H1 (cell line): ENCODE measurements at regions of chr6 and their contacts with region 1.

Region 1: DNA sequence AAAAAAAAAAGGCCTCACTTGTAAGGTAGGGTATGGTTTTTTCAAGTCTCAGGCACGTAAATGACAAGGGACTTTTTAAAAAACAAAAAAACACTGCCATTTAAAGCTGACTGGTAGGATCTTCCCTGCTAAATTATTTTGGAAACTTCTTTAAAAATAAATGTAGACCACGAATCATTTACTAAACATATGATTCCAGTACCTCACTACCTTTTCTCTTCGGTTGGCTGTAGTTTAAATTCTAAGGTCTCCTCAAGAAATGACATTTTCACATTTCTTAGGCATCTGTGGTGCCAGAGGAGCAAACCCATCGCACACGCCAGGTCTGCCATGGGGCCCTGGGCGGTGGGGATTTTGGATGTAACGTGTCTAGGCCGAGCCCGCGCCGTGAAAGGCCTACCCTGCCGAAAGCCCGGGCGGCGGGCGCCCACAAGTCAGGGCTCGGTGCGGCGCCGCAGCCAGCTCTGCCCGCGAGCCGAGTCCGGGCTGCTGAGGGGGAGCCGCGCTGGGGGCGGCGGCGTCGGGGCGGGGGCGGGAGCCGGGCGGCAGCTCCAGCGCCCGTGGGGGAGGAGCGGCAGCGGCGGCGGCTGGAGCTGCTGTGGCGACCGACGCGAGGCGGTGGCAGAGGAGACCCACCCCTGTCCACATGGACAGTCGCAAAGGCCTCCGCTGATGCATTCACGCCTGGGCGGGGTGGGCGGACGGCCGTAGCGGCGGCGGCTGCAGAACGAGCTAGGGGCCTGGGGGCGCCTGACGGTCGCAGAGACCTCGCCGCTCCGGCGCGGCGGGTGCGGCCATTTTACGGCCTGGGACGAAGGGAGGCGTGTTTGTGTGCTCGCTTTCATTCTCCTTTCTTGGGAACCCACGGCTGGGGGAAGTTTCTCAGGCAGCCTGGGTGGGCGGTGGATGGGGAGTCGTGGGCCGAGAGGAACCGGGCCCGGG is at the start of gene SENP6:
- DNase-seq: peak in 1 of 2 experiments; percentile 87
- H3K4me3 ChIP-seq: peak within 1 kb of the TSS; percentile 90 to 99 (median 93)
- H3K27ac ChIP-seq: peak within 1 kb of the TSS; percentile 95
- H3K4me1 ChIP-seq: peaks cover 0 to 8% (median 2%) of the 10 kb centered on the region in 4 experiments; a peak in 3 of 7 replicates
- H3K27me3 ChIP-seq: no peaks in the 10 kb centered on the region
- CTCF ChIP-seq: no peak
- EP300 ChIP-seq: peak in 1 of 2 experiments; percentile 31; a peak in 1 of 3 replicates
- POLR2A ChIP-seq: peak; percentile 73 to 87; a peak in 2 of 3 replicates
- RAD21 ChIP-seq: 0 out of 4 replicates have a peak, but pooled peaks of 1 of the 2 experiments have one; percentile 0
- total RNA-seq, gene SENP6: 94.7 and 103 TPM in 2 replicates

Region 2: DNA sequence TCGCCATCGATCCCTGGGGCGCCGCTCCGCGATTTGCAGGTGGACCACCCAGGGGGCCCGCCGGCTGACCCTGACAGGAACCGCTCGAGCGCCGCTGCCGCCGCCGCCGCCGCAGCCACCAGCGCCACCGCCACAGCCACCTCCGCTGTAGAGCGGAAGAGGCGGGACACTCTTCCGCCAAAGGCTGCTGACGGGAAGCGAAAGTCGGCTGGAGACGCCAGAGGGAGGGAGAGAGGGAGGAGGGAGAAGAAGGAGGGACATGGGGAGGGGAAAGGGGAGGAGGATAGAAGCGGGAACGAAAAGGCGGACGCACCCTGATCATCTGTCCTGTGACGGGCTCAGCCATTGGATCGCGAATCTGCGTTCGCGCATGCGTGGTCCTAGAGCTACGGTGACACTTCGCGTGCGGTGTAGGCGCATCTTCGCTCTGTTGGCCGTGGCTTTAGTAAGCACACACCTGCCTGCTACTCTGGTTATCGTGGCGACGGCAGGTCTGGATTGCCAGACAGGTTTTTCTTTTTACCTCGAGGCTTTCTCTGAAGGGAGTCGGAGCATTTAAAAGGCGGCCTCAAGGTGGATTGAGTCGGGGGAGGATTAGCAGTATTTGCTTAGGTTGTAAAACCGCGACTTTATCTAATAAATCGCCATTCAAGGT is 316.8 kb before region 1 on chr6 and contains the start of gene TMEM30A:
- CTCF ChIA-PET with region 1: no interaction called
- POLR2A ChIA-PET with region 1: interaction called, 11 read pairs
- DNase-seq: peak; percentile 93 to 98
- H3K4me3 ChIP-seq: peak within 1 kb of the TSS; percentile 74 to 99 (median 98)
- H3K27ac ChIP-seq: peak within 1 kb of the TSS; percentile 44; the same call in 1 of the 2 replicates
- H3K4me1 ChIP-seq: peaks cover 0 to 10% (median 0%) of the 10 kb centered on the region in 4 experiments; a peak in 2 of 7 replicates
- H3K27me3 ChIP-seq: no peaks in the 10 kb centered on the region
- CTCF ChIP-seq: no peak
- EP300 ChIP-seq: peak in 1 of 2 experiments; percentile 79; a peak in 1 of 3 replicates
- POLR2A ChIP-seq: peak; percentile 43 to 77
- RAD21 ChIP-seq: 0 out of 4 replicates have a peak, but pooled peaks of 1 of the 2 experiments have one; percentile 1
- total RNA-seq, gene TMEM30A: 65.8 and 71.0 TPM in 2 replicates

Region 3: DNA sequence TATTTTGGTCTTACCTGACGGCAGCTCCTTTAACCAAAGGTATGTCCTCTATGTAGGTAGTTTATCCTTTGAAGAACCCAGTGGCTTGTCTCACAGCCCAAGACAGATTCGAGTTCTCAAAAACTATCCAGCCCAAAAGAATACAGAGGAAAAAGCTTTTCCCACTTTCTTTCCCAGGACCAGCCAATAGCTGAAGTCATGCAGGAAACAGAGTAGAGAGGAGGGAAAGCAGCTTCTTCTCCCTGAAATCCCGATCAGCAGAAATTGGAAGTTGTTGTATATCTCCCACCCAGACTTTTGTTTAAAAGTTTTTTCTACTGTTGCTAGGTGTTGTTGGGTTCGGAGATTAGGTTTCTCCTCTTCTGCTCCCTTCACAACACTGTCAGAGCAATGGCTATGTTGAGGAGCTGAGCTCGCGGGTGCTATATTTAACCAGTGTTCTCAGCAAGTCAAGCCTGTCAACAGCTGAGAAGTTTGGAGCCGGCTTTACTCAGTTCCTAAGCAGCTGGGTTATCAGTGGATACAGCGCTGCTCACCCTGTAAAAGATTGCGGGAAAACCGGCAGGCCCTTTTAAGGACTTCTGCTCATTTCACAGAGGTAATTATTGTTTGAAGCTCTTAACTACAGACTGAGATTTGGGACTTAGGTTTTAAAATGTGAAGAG is 108.0 kb before region 1 on chr6 and contains the start of gene FILIP1:
- CTCF ChIA-PET with region 1: no interaction called
- POLR2A ChIA-PET with region 1: no interaction called
- DNase-seq: no peak
- H3K4me3 ChIP-seq: no peak within 1 kb of the TSS
- H3K27ac ChIP-seq: no peak within 1 kb of the TSS
- H3K4me1 ChIP-seq: peaks cover 0 to 3% (median 0%) of the 10 kb centered on the region in 4 experiments; a peak in 3 of 7 replicates
- H3K27me3 ChIP-seq: no peaks in the 10 kb centered on the region
- CTCF ChIP-seq: no peak
- EP300 ChIP-seq: no peak
- POLR2A ChIP-seq: no peak
- RAD21 ChIP-seq: no peak
- total RNA-seq, gene FILIP1: 5.0 and 5.7 TPM in 2 replicates

Region 4: DNA sequence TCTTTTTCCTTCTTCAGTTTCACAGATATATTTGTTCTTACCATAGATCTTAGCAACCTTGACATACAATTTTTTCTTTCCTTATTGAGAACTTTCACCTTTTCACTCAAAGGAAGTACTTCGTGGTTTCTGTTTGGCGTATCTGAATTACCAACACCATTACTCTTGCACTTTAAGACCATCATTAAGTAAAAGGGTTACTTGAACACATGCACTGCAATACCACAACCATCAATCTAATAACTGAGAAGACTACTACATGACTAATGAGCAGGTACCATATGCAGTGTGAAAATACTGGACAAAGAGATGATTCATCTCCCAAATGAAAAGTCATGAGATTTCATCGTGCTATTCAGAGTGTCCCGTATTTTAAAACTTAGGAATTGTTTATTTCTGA is 21.6 kb before region 1 on chr6:
- CTCF ChIA-PET with region 1: interaction called, 3 read pairs
- POLR2A ChIA-PET with region 1: interaction called, 18 read pairs
- DNase-seq: no peak
- H3K4me3 ChIP-seq: no peak overlapping the region
- H3K27ac ChIP-seq: no peak overlapping the region
- H3K4me1 ChIP-seq: no peaks in the 10 kb centered on the region
- H3K27me3 ChIP-seq: no peaks in the 10 kb centered on the region
- CTCF ChIP-seq: no peak
- EP300 ChIP-seq: no peak
- POLR2A ChIP-seq: no peak
- RAD21 ChIP-seq: no peak

Region 5: GRCh38 chr6:75611702-75612375 is 10.3 kb after region 1 on chr6:
- CTCF ChIA-PET with region 1: no interaction called
- POLR2A ChIA-PET with region 1: interaction called, 48 read pairs
- DNase-seq: no peak
- H3K4me3 ChIP-seq: no peak overlapping the region
- H3K27ac ChIP-seq: no peak overlapping the region
- H3K4me1 ChIP-seq: peaks cover 0 to 10% (median 4%) of the 10 kb centered on the region in 4 experiments; a peak in 4 of 7 replicates
- H3K27me3 ChIP-seq: no peaks in the 10 kb centered on the region
- CTCF ChIP-seq: no peak
- EP300 ChIP-seq: no peak
- POLR2A ChIP-seq: no peak
- RAD21 ChIP-seq: no peak

Region 6: DNA sequence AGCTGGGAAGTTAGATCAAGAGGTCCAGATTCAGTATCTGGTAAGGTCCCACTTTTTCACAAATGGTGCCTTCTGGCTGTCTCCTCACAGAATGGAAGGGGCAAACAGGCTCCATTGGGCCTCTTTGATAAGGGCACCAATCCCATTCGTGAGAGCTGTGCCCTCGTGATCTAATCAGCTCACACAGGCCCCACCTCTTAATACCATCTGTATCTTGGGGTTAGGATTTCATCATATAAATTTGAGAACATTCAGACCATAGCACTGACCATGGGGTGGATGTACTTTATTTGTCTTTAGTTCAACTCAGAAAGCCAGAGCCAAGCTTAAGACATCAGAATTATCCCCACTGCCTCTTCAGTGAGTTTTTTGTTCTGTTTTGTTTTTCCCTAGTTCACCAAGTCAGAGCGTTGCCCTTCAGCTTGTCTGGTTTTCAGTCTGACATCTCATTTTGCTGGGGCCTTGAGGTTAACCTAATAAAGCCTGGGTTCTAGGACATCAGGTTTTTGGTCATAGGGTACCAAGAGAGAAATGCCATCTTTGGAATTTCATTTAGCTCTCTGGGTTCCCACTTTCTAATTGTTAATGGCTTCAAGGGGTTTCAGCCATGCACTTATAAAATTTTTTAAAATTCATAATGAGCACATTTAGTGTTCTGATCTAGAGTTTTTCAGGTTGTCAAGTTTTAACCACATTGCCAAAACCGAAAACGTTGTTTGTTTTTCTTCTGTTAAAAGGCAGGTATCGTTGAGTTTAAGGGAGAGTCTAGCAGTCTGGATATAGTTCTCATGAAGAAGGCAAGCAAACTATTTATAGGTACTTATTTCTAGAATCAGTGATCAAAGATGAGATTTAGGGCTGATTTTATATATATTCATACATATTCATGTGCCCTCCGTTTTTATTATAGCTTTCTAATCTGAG is 19.1 kb after region 1 on chr6:
- CTCF ChIA-PET with region 1: no interaction called
- POLR2A ChIA-PET with region 1: interaction called, 14 read pairs
- DNase-seq: no peak
- H3K4me3 ChIP-seq: no peak overlapping the region
- H3K27ac ChIP-seq: no peak overlapping the region
- H3K4me1 ChIP-seq: no peaks in the 10 kb centered on the region
- H3K27me3 ChIP-seq: no peaks in the 10 kb centered on the region
- CTCF ChIP-seq: no peak
- EP300 ChIP-seq: no peak
- POLR2A ChIP-seq: no peak
- RAD21 ChIP-seq: no peak